B cell (primary cell): ENCODE measurements at regions of chr17 and their contacts with region 1.

Region 1: DNA sequence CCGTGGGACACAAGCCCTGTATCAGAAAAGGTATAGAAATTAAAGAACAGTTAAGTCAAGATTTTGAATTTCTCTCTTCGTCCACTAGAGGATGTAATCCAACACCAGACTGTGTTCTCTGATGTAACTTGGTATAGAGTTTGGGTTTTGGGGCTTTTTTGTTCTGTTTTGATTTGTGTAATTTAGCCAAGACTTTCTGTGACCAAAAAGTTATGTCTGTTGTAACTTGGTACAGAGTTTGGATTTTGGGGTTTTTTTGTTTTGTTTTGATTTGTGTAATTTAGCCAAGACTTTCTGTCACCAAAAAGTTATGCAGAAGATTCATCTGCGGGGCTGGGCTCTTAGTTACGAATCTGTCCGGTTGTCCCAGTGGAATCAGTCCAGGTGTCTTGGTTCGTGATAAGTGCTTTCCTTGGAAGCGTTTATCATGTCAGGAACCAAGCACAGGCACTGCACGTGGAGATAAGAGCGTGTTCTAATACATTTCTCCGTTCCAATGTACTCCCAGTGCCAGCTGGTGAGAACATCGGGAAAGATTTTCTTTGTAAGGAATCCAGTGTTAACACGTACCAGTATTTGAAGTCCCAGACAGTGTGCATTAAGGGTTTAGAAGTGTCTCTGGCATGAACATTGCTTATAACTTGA is 44.1 kb upstream of the SEC14L1 start:
- DNase-seq: peak; percentile 53
- ATAC-seq: peak; percentile 58
- H3K4me3 ChIP-seq: no peak overlapping the region
- H3K4me3 Mint-ChIP-seq: no peak overlapping the region
- H3K27ac ChIP-seq: no peak overlapping the region
- H3K27ac Mint-ChIP-seq: peak overlapping the region; percentile 24
- H3K4me1 ChIP-seq: peaks cover 0 to 3% of the 10 kb centered on the region in 2 donors
- H3K4me1 Mint-ChIP-seq: peaks cover 26% of the 10 kb centered on the region
- H3K27me3 ChIP-seq: no peaks in the 10 kb centered on the region
- H3K27me3 Mint-ChIP-seq: no peaks in the 10 kb centered on the region
- CTCF ChIP-seq: peak; percentile 82

Region 2: GRCh38 chr17:77076124-77076872 is 20.4 kb before region 1 on chr17:
- CTCF ChIA-PET with region 1: no interaction called
- POLR2A ChIA-PET with region 1: no interaction called
- intact Hi-C with region 1: no loop called
- DNase-seq: no peak
- ATAC-seq: no peak
- H3K4me3 ChIP-seq: no peak overlapping the region
- H3K4me3 Mint-ChIP-seq: no peak overlapping the region
- H3K27ac ChIP-seq: no peak overlapping the region
- H3K27ac Mint-ChIP-seq: no peak overlapping the region
- H3K4me1 ChIP-seq: peaks cover 6 to 8% of the 10 kb centered on the region in 2 donors
- H3K4me1 Mint-ChIP-seq: peaks cover 9% of the 10 kb centered on the region
- H3K27me3 ChIP-seq: peaks cover 0 to 10% (median 2%) of the 10 kb centered on the region in 4 experiments
- H3K27me3 Mint-ChIP-seq: peaks cover 42% of the 10 kb centered on the region
- CTCF ChIP-seq: no peak

Region 3: DNA sequence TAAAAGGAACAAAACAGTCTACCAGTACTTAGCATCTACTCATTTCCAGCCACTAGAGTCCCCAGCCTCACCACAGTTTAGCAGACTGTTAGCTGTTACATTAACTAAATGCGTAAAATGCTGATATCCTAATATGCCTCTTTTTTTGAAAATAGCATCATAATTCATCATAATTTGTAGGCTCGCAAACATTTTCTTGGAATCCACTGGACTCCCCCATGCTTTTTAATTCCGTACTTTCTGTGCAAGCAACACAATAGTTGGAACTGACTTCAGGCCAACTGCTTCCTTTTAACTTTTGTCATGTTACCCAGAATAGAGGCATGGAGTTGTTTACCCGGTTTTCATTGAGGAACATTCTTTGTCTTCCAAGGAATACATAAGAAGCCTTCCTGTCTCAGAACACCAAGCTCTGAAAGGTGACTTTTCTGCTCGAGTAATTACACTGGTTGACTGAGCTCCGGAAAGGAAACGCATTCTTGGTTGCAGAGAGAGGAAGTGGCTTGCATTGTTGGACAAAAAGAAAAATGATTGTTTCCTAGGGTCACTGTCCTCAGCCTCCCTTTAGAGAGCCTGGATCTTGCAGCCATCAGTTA is 13.2 kb after region 1 on chr17:
- CTCF ChIA-PET with region 1: interaction called, 21 read pairs
- POLR2A ChIA-PET with region 1: no interaction called
- intact Hi-C with region 1: no loop called
- DNase-seq: peak; percentile 58
- ATAC-seq: no peak
- H3K4me3 ChIP-seq: peak overlapping the region in 3 of 5 experiments; percentile 15 to 42 (median 18)
- H3K4me3 Mint-ChIP-seq: peak overlapping the region; percentile 78
- H3K27ac ChIP-seq: no peak overlapping the region
- H3K27ac Mint-ChIP-seq: peak overlapping the region; percentile 17
- H3K4me1 ChIP-seq: peaks cover 25 to 43% of the 10 kb centered on the region in 2 donors
- H3K4me1 Mint-ChIP-seq: peaks cover 47% of the 10 kb centered on the region
- H3K27me3 ChIP-seq: no peaks in the 10 kb centered on the region
- H3K27me3 Mint-ChIP-seq: no peaks in the 10 kb centered on the region
- CTCF ChIP-seq: no peak

Region 4: DNA sequence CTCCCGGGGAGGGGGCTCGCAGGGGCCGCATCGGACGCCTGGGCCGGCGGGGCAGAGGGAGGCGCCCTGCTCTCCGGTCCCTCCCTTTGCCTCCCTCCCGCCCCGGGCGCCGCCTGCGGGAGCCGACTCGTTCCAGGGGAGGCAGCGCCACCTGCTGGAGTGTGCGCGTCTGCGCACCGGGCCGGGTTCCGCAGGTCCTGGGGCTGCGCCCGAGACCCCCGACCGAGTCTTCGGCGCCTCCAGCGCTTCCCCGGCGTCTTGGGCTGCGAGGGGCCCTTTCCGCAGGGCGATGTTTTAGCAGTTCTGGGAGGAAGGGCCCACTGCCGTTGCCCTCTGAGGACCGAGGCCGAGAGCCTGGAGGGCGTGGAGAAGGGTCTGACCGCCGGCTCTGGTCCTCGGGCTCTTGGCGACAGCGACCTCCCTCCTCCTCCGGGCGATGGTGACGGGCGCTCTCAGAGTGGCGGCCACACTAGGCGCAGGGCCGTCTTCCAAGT is 150.4 kb after region 1 on chr17:
- CTCF ChIA-PET with region 1: interaction called, 3 read pairs
- POLR2A ChIA-PET with region 1: no interaction called
- intact Hi-C with region 1: loop called (anchors 1 kb)
- DNase-seq: peak; percentile 89
- ATAC-seq: peak; percentile 98
- H3K4me3 ChIP-seq: peak overlapping the region in 4 of 5 experiments; percentile 32 to 54 (median 48)
- H3K4me3 Mint-ChIP-seq: peak overlapping the region; percentile 71
- H3K27ac ChIP-seq: no peak overlapping the region
- H3K27ac Mint-ChIP-seq: no peak overlapping the region
- H3K4me1 ChIP-seq: peaks cover 9 to 10% of the 10 kb centered on the region in 2 donors
- H3K4me1 Mint-ChIP-seq: peaks cover 16% of the 10 kb centered on the region
- H3K27me3 ChIP-seq: peaks cover 0 to 20% (median 2%) of the 10 kb centered on the region in 4 experiments
- H3K27me3 Mint-ChIP-seq: peaks cover 41% of the 10 kb centered on the region
- CTCF ChIP-seq: peak; percentile 98